Naive thymus-derived CD8-positive, alpha-beta T cell (primary cell): ENCODE measurements at regions of chr19 and their contacts with region 1.

Region 1: GRCh38 chr19:11597202-11598102 is at the start of gene ZNF627:
- DNase-seq: peak; percentile 90 to 99 (median 98)
- ATAC-seq: peak; percentile 96 to 98
- H3K4me3 Mint-ChIP-seq: peak within 1 kb of the TSS; percentile 82 to 96 (median 90)
- H3K27ac Mint-ChIP-seq: peak within 1 kb of the TSS; percentile 75 to 96 (median 94)
- H3K4me1 Mint-ChIP-seq: peaks cover 12 to 44% (median 26%) of the 10 kb centered on the region in 4 donors
- H3K27me3 Mint-ChIP-seq: no peaks in the 10 kb centered on the region
- polyA plus RNA-seq, gene ZNF627: 7.7 to 11.9 (median 7.9) TPM

Region 2: GRCh38 chr19:11581740-11582139 is 15.7 kb before region 1 on chr19:
- POLR2A ChIA-PET with region 1: interaction called, 15 read pairs
- DNase-seq: peak in 7 of 10 donors; percentile 19 to 64 (median 31)
- ATAC-seq: peak; percentile 65 to 79
- H3K4me3 Mint-ChIP-seq: peak overlapping the region; percentile 59 to 83 (median 78)
- H3K27ac Mint-ChIP-seq: peak overlapping the region; percentile 84 to 99 (median 93)
- H3K4me1 Mint-ChIP-seq: peaks cover 14 to 57% (median 31%) of the 10 kb centered on the region in 4 donors
- H3K27me3 Mint-ChIP-seq: no peaks in the 10 kb centered on the region